CD4-positive, alpha-beta T cell (primary cell): ENCODE measurements at regions of chr1 and their contacts with region 1.

Region 1: DNA sequence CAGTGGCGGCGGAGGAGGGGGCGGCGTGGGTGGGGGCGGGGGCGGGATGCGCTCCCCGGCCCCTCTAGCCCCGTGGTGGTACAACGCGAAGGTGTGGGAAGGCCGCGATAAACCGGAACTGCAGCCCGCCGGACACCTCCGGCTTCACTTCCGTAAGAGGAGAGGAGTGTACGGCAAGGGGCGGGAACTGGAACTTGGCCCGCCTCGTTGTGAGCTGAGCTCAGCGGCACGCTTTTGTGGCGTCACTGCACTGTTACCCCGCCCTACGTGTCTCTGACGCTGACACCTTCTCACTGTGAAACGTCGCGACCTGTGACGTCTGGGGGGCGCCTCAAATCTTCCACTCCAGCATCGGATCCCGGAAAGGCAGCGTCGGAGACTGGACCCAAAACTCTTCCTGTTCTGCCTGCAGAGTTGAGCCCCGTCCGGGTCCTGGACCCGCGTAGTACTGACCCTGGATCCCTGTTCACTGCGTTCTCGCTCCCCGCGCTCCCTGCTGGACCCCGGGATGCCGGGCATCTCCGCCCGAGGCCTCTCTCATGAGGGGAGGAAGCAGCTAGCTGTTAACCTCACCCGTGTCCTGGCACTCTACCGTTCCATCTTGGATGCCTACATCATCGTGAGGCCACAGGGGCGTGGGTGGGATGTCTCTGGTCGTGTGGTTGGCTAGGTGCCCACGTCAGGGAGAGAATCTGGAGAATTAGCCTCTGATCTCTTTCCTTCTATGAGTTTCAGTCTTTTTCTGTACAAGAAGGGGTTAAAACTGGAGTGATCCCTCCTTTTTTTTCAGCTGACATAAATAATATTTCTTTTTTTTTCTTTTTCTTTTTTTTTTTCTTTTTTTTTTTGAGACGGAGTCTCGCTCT is at the start of gene ISG20L2:
- DNase-seq: peak; percentile 80 to 99 (median 90)
- ATAC-seq: peak; percentile 90
- H3K4me3 ChIP-seq: peak within 1 kb of the TSS; percentile 99
- H3K4me3 Mint-ChIP-seq: no peak within 1 kb of the TSS
- H3K27ac ChIP-seq: peak within 1 kb of the TSS; percentile 90 to 98
- H3K27ac Mint-ChIP-seq: peak within 1 kb of the TSS; percentile 98
- H3K4me1 ChIP-seq: peaks cover 48% of the 10 kb centered on the region
- H3K4me1 Mint-ChIP-seq: peaks cover 23% of the 10 kb centered on the region
- H3K27me3 ChIP-seq: no peaks in the 10 kb centered on the region
- H3K27me3 Mint-ChIP-seq: no peaks in the 10 kb centered on the region
- CTCF ChIP-seq: no peak
- total RNA-seq, gene ISG20L2: 44.2 to 50.9 TPM

Region 2: GRCh38 chr1:156445789-156446263 is 283.0 kb before region 1 on chr1:
- CTCF ChIA-PET with region 1: no interaction called
- POLR2A ChIA-PET with region 1: no interaction called
- intact Hi-C with region 1: no loop called
- DNase-seq: peak; percentile 61 to 88 (median 72)
- ATAC-seq: peak; percentile 95
- H3K4me3 ChIP-seq: no peak overlapping the region
- H3K4me3 Mint-ChIP-seq: no peak overlapping the region
- H3K27ac ChIP-seq: no peak overlapping the region
- H3K27ac Mint-ChIP-seq: no peak overlapping the region
- H3K4me1 ChIP-seq: peaks cover 7% of the 10 kb centered on the region
- H3K4me1 Mint-ChIP-seq: peaks cover 9% of the 10 kb centered on the region
- H3K27me3 ChIP-seq: peaks cover 41 to 43% of the 10 kb centered on the region in 2 experiments
- H3K27me3 Mint-ChIP-seq: peaks cover 53% of the 10 kb centered on the region
- CTCF ChIP-seq: peak; percentile 90

Region 3: GRCh38 chr1:156625436-156626078 is 103.3 kb before region 1 on chr1:
- CTCF ChIA-PET with region 1: interaction called, 9 read pairs
- POLR2A ChIA-PET with region 1: no interaction called
- intact Hi-C with region 1: loop called (anchors 2 kb)
- DNase-seq: peak; percentile 54 to 84 (median 64)
- ATAC-seq: peak; percentile 78
- H3K4me3 ChIP-seq: peak overlapping the region; percentile 40
- H3K4me3 Mint-ChIP-seq: peak overlapping the region; percentile 86
- H3K27ac ChIP-seq: no peak overlapping the region
- H3K27ac Mint-ChIP-seq: no peak overlapping the region
- H3K4me1 ChIP-seq: peaks cover 25% of the 10 kb centered on the region
- H3K4me1 Mint-ChIP-seq: peaks cover 6% of the 10 kb centered on the region
- H3K27me3 ChIP-seq: peaks cover 46 to 51% of the 10 kb centered on the region in 2 experiments
- H3K27me3 Mint-ChIP-seq: peaks cover 74% of the 10 kb centered on the region
- CTCF ChIP-seq: peak; percentile 94

Region 4: GRCh38 chr1:156689035-156689952 is 39.5 kb before region 1 on chr1:
- CTCF ChIA-PET with region 1: interaction called, 119 read pairs
- POLR2A ChIA-PET with region 1: interaction called, 38 read pairs
- intact Hi-C with region 1: loop called (anchors 1 kb)
- DNase-seq: peak; percentile 62 to 88 (median 71)
- ATAC-seq: peak; percentile 99
- H3K4me3 ChIP-seq: no peak overlapping the region
- H3K4me3 Mint-ChIP-seq: no peak overlapping the region
- H3K27ac ChIP-seq: no peak overlapping the region
- H3K27ac Mint-ChIP-seq: no peak overlapping the region
- H3K4me1 ChIP-seq: peaks cover 28% of the 10 kb centered on the region
- H3K4me1 Mint-ChIP-seq: peaks cover 31% of the 10 kb centered on the region
- H3K27me3 ChIP-seq: peaks cover 49 to 57% of the 10 kb centered on the region in 2 experiments
- H3K27me3 Mint-ChIP-seq: peaks cover 61% of the 10 kb centered on the region
- CTCF ChIP-seq: peak; percentile 95

Region 5: DNA sequence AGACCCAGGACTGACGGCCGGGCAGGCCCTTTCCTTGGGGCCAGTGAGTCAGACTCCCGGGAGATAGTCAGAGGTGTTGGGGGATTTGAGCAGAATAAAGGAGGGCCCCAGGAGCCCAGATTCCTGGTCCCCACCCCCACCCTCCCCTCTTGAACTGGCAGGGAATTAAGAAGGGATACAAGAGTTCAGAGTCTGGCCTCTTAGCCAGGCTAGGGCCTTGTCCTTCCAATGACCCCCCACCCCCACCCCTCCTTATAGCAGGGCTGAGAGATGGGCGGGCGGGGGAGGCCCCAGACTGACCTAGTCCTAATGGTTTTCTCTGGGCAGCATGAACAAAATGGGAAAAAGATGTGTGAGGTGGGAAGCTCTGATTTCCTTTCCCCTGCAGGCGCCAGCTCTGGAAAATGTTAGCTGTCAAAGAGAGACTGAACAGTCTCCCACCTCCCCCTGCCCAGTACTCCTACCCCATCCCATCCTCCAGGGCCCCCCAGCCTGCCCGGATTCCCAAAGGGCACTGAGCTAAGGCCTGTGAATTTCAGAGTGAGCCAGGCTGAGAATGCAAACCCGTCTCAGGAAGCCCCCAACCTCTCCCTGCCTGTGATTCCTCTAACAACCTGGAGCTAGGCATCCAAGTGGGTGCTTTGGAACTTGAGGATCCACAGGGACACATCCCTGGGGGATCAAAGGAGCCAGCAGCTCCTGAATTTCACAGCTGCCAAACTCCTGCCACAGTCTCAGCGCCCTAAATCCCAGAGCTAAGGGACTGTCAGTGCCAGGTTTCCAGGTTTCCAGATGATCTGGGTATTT is 17.6 kb before region 1 on chr1:
- CTCF ChIA-PET with region 1: interaction called, 43 read pairs
- POLR2A ChIA-PET with region 1: interaction called, 25 read pairs
- intact Hi-C with region 1: loop called (anchors 1 to 2 kb)
- DNase-seq: peak in 1 of 14 experiments; percentile 6
- ATAC-seq: no peak
- H3K4me3 ChIP-seq: no peak overlapping the region
- H3K4me3 Mint-ChIP-seq: no peak overlapping the region
- H3K27ac ChIP-seq: no peak overlapping the region
- H3K27ac Mint-ChIP-seq: no peak overlapping the region
- H3K4me1 ChIP-seq: peaks cover 14% of the 10 kb centered on the region
- H3K4me1 Mint-ChIP-seq: peaks cover 11% of the 10 kb centered on the region
- H3K27me3 ChIP-seq: no peaks in the 10 kb centered on the region
- H3K27me3 Mint-ChIP-seq: no peaks in the 10 kb centered on the region
- CTCF ChIP-seq: no peak

Region 6: GRCh38 chr1:156751758-156752757 is 23.2 kb after region 1 on chr1:
- CTCF ChIA-PET with region 1: interaction called, 30 read pairs
- POLR2A ChIA-PET with region 1: interaction called, 36 read pairs
- intact Hi-C with region 1: loop called (anchors 2 kb)
- DNase-seq: peak; percentile 95 to 99 (median 98)
- ATAC-seq: peak; percentile 85
- H3K4me3 ChIP-seq: peak overlapping the region; percentile 97
- H3K4me3 Mint-ChIP-seq: peak overlapping the region; percentile 91
- H3K27ac ChIP-seq: peak overlapping the region; percentile 61 to 86
- H3K27ac Mint-ChIP-seq: peak overlapping the region; percentile 85
- H3K4me1 ChIP-seq: peaks cover 49% of the 10 kb centered on the region
- H3K4me1 Mint-ChIP-seq: peaks cover 60% of the 10 kb centered on the region
- H3K27me3 ChIP-seq: no peaks in the 10 kb centered on the region
- H3K27me3 Mint-ChIP-seq: no peaks in the 10 kb centered on the region
- CTCF ChIP-seq: no peak

Region 7: GRCh38 chr1:156773607-156774006 is 44.8 kb after region 1 on chr1:
- CTCF ChIA-PET with region 1: interaction called, 54 read pairs
- POLR2A ChIA-PET with region 1: interaction called, 5 read pairs
- intact Hi-C with region 1: loop called in 1 of 2 experiments (anchors 2 kb)
- DNase-seq: peak in 2 of 14 experiments; percentile 19 to 28
- ATAC-seq: peak; percentile 63
- H3K4me3 ChIP-seq: no peak overlapping the region
- H3K4me3 Mint-ChIP-seq: peak overlapping the region; percentile 6
- H3K27ac ChIP-seq: no peak overlapping the region
- H3K27ac Mint-ChIP-seq: no peak overlapping the region
- H3K4me1 ChIP-seq: peaks cover 44% of the 10 kb centered on the region
- H3K4me1 Mint-ChIP-seq: peaks cover 74% of the 10 kb centered on the region
- H3K27me3 ChIP-seq: no peaks in the 10 kb centered on the region
- H3K27me3 Mint-ChIP-seq: no peaks in the 10 kb centered on the region
- CTCF ChIP-seq: no peak

Region 8: GRCh38 chr1:156892190-156893047 is 163.6 kb after region 1 on chr1:
- CTCF ChIA-PET with region 1: interaction called, 12 read pairs
- POLR2A ChIA-PET with region 1: no interaction called
- intact Hi-C with region 1: no loop called
- DNase-seq: peak; percentile 71 to 92 (median 78)
- ATAC-seq: peak; percentile 92
- H3K4me3 ChIP-seq: peak overlapping the region; percentile 42
- H3K4me3 Mint-ChIP-seq: peak overlapping the region; percentile 82
- H3K27ac ChIP-seq: no peak overlapping the region
- H3K27ac Mint-ChIP-seq: no peak overlapping the region
- H3K4me1 ChIP-seq: peaks cover 29% of the 10 kb centered on the region
- H3K4me1 Mint-ChIP-seq: peaks cover 16% of the 10 kb centered on the region
- H3K27me3 ChIP-seq: peaks cover 39 to 51% of the 10 kb centered on the region in 2 experiments
- H3K27me3 Mint-ChIP-seq: peaks cover 73% of the 10 kb centered on the region
- CTCF ChIP-seq: peak; percentile 76

Region 9: GRCh38 chr1:157085421-157085820 is 356.6 kb after region 1 on chr1:
- CTCF ChIA-PET with region 1: no interaction called
- POLR2A ChIA-PET with region 1: no interaction called
- intact Hi-C with region 1: no loop called
- DNase-seq: peak in 1 of 14 experiments; percentile 38
- ATAC-seq: no peak
- H3K4me3 ChIP-seq: no peak overlapping the region
- H3K4me3 Mint-ChIP-seq: no peak overlapping the region
- H3K27ac ChIP-seq: no peak overlapping the region
- H3K27ac Mint-ChIP-seq: no peak overlapping the region
- H3K4me1 ChIP-seq: peaks cover 5% of the 10 kb centered on the region
- H3K4me1 Mint-ChIP-seq: peaks cover 5% of the 10 kb centered on the region
- H3K27me3 ChIP-seq: no peaks in the 10 kb centered on the region
- H3K27me3 Mint-ChIP-seq: peaks cover 11% of the 10 kb centered on the region
- CTCF ChIP-seq: no peak